ENCODE measurements at regions of chr11 and their contacts with region 1.

Region 1: DNA sequence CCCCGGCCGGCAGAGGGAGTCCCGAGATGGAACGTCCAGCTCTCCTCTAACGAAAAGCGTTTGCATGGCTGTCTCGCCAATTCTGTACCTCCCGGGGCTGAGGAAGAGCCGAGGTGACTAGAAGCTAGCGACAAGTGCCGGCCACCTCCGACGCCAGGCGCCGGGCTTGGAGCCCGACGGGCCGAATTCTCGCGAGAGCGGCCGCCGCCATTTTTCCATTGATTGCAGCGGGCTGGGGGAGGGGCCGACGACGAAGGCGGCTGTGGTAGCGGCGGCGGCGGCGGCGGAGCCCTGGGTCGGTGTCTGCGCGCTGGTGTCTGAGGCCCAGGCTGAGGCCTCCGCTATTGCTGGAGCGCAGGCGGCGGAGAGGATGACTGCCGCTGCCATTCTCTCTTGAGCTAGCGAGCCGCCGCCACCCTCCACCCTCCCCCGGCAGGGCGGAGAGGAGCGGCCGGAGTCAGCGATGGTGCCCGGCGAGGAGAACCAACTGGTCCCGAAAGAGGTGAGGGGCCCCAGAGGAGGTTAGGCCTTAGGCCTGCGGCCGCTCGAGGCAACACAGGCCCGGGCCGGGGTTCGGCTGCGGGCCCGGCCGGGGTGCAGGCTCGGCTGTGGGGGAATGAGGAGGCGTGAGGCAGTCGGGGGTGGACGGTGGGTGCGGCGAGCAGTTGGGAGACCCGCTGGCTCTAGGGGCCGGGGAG is at the start of gene USP47:
- DNase-seq: peak; percentile 94
- H3K4me3 Mint-ChIP-seq: no peak within 1 kb of the TSS
- H3K27ac Mint-ChIP-seq: no peak within 1 kb of the TSS
- H3K4me1 Mint-ChIP-seq: peaks cover 2% of the 10 kb centered on the region
- H3K27me3 Mint-ChIP-seq: peaks cover 5% of the 10 kb centered on the region
- total RNA-seq, gene USP47: 52.4 to 56.0 TPM

Region 2: DNA sequence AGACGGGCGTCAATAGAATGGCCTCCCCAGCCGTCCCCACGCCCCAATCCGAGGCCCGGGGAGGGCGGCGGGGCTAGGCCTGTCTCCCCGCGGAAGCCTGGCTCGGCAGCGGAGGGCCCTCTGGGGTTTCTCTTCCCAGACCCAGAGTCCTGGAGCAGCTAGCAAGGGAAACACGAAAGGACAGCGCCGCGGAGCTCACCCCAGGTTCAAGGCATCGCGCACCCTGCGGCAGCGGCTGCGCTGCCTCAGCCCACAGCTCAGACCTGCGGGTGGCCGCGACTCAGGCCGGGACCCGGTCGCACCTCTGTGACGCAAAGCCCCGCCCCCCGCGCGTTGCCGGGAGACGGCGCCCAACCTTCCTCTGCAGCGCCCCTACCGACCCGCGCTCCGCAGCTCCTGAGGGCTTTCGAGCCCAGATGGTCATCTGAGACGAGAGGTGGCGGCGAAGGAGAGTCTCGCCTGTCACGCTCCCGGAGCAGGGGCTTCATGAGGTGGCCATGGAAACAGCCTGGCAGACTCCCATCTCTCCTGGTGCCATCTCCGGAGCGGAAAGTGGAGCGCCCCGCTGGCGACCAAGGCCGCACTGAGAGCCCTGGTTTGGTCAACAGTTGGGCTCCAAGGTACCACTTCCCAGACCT is 1300.8 kb before region 1 on chr11 and contains the start of gene RNF141:
- CTCF ChIA-PET with region 1: no interaction called
- intact Hi-C with region 1: loop called (anchors 5 kb)
- DNase-seq: peak; percentile 96
- H3K4me3 Mint-ChIP-seq: peak within 1 kb of the TSS; percentile 86
- H3K27ac Mint-ChIP-seq: no peak within 1 kb of the TSS
- H3K4me1 Mint-ChIP-seq: peaks cover 21% of the 10 kb centered on the region
- H3K27me3 Mint-ChIP-seq: no peaks in the 10 kb centered on the region
- total RNA-seq, gene RNF141: 20.9 to 21.8 TPM

Region 3: GRCh38 chr11:11148104-11148509 is 693.8 kb before region 1 on chr11:
- CTCF ChIA-PET with region 1: no interaction called
- intact Hi-C with region 1: loop called (anchors 2 kb)
- DNase-seq: peak; percentile 72
- H3K4me3 Mint-ChIP-seq: no peak overlapping the region
- H3K27ac Mint-ChIP-seq: no peak overlapping the region
- H3K4me1 Mint-ChIP-seq: peaks cover 43% of the 10 kb centered on the region
- H3K27me3 Mint-ChIP-seq: no peaks in the 10 kb centered on the region

Region 4: DNA sequence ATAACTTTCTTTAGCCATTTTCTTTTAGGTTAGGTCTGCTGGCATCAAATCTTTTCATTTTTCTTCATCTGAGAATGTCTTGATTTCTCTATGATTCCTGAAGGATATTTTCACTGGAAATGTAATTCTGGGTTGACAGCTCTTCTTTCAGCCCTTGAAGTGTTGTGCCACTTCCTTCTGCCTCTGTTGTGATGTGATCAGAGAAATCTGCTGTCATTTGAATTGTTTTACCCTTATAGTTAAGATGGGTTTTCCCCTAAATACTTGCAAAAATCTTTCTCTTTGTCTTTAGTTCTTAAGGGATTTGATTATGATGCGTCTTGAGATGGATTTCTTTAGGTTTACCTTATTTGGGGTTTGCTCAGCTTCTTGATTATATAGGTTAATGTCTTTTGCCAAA is 22.9 kb after region 1 on chr11:
- CTCF ChIA-PET with region 1: interaction called, 11 read pairs
- intact Hi-C with region 1: loop called (anchors 1 kb)
- DNase-seq: no peak
- H3K4me3 Mint-ChIP-seq: no peak overlapping the region
- H3K27ac Mint-ChIP-seq: no peak overlapping the region
- H3K4me1 Mint-ChIP-seq: peaks cover 62% of the 10 kb centered on the region
- H3K27me3 Mint-ChIP-seq: no peaks in the 10 kb centered on the region

Region 5: GRCh38 chr11:12174477-12175143 is 332.7 kb after region 1 on chr11:
- CTCF ChIA-PET with region 1: no interaction called
- intact Hi-C with region 1: loop called (anchors 1 kb)
- DNase-seq: no peak
- H3K4me3 Mint-ChIP-seq: peak overlapping the region; percentile 19
- H3K27ac Mint-ChIP-seq: peak overlapping the region; percentile 90
- H3K4me1 Mint-ChIP-seq: peaks cover 66% of the 10 kb centered on the region
- H3K27me3 Mint-ChIP-seq: no peaks in the 10 kb centered on the region

Region 6: DNA sequence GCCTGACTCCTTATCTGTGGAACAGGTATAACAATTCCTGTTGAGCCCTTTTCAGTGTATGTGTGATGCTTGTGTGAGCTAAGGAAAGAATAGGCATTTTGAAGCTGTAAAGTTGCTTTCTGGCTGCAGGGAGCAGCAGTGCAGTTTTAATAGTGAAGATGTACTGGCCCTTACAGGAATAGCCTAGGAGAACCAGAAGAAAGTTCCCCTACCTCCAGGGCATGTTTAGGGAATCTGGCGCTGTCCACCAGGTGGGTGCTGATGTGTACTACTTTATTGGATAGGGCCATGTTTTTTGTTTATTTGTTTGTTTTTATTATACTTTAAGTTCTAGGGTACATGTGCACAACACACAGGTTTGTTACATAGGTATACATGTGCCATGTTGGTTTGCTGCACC is 1447.2 kb after region 1 on chr11:
- CTCF ChIA-PET with region 1: no interaction called
- intact Hi-C with region 1: loop called (anchors 10 kb)
- DNase-seq: no peak
- H3K4me3 Mint-ChIP-seq: no peak overlapping the region
- H3K27ac Mint-ChIP-seq: no peak overlapping the region
- H3K4me1 Mint-ChIP-seq: peaks cover 76% of the 10 kb centered on the region
- H3K27me3 Mint-ChIP-seq: no peaks in the 10 kb centered on the region

Measured in activated naive CD4-positive, alpha-beta T cell treated with anti-CD3 and anti-CD28 coated beads for 36 hours (primary cell).